ENCODE measurements at regions of chr5 and their contacts with region 1.

Region 1: GRCh38 chr5:141960449-141961202 is 2.6 kb upstream of the PCDH12 start:
- DNase-seq: peak; percentile 96
- ATAC-seq: peak; percentile 92
- H3K4me3 Mint-ChIP-seq: peak overlapping the region; percentile 40
- H3K27ac Mint-ChIP-seq: peak overlapping the region; percentile 86
- H3K4me1 Mint-ChIP-seq: peaks cover 58% of the 10 kb centered on the region
- H3K27me3 Mint-ChIP-seq: no peaks in the 10 kb centered on the region

Region 2: GRCh38 chr5:141650851-141651727 is 309.5 kb before region 1 on chr5 and contains the start of gene FCHSD1:
- CTCF ChIA-PET with region 1: interaction called, 10 read pairs
- POLR2A ChIA-PET with region 1: no interaction called
- DNase-seq: peak; percentile 91
- ATAC-seq: peak; percentile 95
- H3K4me3 Mint-ChIP-seq: peak within 1 kb of the TSS; percentile 95
- H3K27ac Mint-ChIP-seq: peak within 1 kb of the TSS; percentile 95
- H3K4me1 Mint-ChIP-seq: peaks cover 45% of the 10 kb centered on the region
- H3K27me3 Mint-ChIP-seq: no peaks in the 10 kb centered on the region
- total RNA-seq, gene FCHSD1: 46.9 to 47.8 TPM

Region 3: DNA sequence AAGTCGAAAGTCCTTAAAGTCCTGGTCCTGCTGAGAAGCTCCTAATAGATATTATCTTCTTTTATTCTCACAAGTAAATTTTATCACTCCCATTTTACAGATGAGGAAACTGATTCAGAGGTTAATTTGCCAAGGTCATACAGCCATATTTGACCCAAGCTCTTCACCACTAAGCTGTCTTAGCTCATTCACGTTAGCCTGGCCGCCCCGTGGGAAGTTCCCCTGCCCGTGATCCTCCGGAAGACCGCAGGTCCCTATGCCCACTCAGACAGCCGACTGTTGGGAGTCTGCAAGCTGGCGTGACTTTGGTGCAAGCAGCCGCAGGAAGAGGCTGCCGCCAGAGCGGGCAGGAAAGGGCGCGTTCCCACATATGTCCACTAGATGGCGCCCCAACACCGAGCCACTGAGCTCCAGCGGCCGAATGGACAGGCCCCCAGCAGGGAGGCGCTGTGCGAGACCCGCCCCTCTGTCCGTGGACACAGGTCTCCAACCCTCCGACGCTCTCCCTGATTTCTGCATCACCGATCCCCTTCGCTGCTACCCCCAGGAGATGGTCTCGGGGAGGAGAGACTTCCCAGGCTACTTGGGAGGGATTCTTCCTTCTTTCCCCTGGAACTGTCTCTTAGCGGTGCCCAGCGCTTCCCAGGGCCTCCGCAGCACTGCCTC is 268.6 kb before region 1 on chr5:
- CTCF ChIA-PET with region 1: interaction called, 224 read pairs
- POLR2A ChIA-PET with region 1: interaction called, 14 read pairs
- DNase-seq: peak; percentile 89
- ATAC-seq: peak; percentile 89
- H3K4me3 Mint-ChIP-seq: peak overlapping the region; percentile 71
- H3K27ac Mint-ChIP-seq: peak overlapping the region; percentile 75
- H3K4me1 Mint-ChIP-seq: peaks cover 28% of the 10 kb centered on the region
- H3K27me3 Mint-ChIP-seq: peaks cover 23% of the 10 kb centered on the region

Region 4: GRCh38 chr5:141722266-141722665 is 238.4 kb before region 1 on chr5:
- CTCF ChIA-PET with region 1: no interaction called
- POLR2A ChIA-PET with region 1: no interaction called
- DNase-seq: no peak
- ATAC-seq: no peak
- H3K4me3 Mint-ChIP-seq: no peak overlapping the region
- H3K27ac Mint-ChIP-seq: no peak overlapping the region
- H3K4me1 Mint-ChIP-seq: no peaks in the 10 kb centered on the region
- H3K27me3 Mint-ChIP-seq: peaks cover 13% of the 10 kb centered on the region

Region 5: GRCh38 chr5:141783005-141783941 is 177.4 kb before region 1 on chr5:
- CTCF ChIA-PET with region 1: no interaction called
- POLR2A ChIA-PET with region 1: no interaction called
- DNase-seq: no peak
- ATAC-seq: no peak
- H3K4me3 Mint-ChIP-seq: no peak overlapping the region
- H3K27ac Mint-ChIP-seq: no peak overlapping the region
- H3K4me1 Mint-ChIP-seq: peaks cover 2% of the 10 kb centered on the region
- H3K27me3 Mint-ChIP-seq: peaks cover 8% of the 10 kb centered on the region

Region 6: DNA sequence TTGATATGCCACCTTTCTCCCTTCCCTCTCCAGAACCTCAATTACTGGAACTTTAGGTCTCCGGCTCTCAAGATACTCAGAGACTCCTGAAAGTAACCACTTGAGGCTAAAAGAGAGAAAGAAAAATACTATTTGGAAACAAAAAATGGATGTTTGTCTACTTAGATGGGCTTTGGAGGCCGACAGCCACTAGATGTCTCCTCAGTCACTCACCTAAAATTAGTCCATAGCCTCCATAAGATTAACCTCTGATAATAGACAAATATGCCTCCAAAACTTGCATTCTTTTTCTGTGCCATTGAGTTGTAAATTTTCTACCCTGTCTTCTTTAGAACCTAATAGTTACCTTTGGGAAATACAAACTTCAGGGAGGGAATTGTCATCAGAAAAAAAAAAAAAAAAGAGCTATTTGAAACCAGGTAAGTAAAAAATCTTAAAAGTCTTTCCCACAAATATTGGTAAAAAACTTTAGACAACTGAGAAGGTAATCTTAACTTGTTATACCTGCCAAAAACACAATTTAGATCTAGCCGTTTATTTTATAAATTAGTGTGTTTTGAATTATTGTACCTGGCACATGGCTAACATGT is 71.2 kb before region 1 on chr5:
- CTCF ChIA-PET with region 1: interaction called, 145 read pairs
- POLR2A ChIA-PET with region 1: interaction called, 7 read pairs
- DNase-seq: no peak
- ATAC-seq: no peak
- H3K4me3 Mint-ChIP-seq: no peak overlapping the region
- H3K27ac Mint-ChIP-seq: no peak overlapping the region
- H3K4me1 Mint-ChIP-seq: no peaks in the 10 kb centered on the region
- H3K27me3 Mint-ChIP-seq: peaks cover 28% of the 10 kb centered on the region

Region 7: DNA sequence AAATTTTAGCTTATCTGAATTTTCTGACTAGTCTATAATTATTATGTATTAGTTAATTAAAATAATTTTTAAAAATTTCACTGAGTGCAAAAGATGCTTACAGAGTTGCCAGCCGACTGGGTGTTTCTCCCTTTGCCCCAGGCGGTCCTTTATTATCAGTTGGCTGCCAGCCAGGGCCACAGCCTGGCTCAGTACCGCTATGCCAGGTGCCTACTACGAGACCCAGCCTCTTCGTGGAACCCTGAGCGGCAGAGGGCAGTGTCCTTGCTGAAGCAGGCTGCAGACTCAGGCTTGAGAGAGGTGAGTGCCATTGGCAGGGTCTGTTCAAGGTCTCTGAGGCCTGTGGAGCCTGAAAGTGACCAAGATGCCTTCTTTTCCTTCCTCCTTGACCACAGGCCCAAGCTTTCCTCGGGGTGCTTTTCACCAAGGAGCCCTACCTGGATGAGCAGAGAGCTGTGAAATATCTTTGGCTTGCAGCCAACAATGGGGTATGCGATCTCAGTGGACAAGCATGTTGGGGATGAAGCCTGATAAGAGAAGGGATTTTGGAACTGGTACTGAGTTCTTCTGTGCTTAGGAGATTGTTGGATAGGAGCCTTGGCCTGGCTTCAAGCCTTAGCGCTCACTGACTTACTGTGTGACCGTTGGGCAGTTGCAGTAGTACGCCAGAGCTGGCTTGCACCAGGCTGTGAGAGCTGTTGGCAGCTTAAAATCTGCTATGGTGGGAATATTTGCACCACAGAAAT is 26.4 kb before region 1 on chr5:
- CTCF ChIA-PET with region 1: interaction called, 49 read pairs
- POLR2A ChIA-PET with region 1: no interaction called
- DNase-seq: no peak
- ATAC-seq: no peak
- H3K4me3 Mint-ChIP-seq: no peak overlapping the region
- H3K27ac Mint-ChIP-seq: no peak overlapping the region
- H3K4me1 Mint-ChIP-seq: peaks cover 3% of the 10 kb centered on the region
- H3K27me3 Mint-ChIP-seq: no peaks in the 10 kb centered on the region

Region 8: GRCh38 chr5:141992349-141992963 is 31.8 kb after region 1 on chr5:
- CTCF ChIA-PET with region 1: interaction called, 12 read pairs
- POLR2A ChIA-PET with region 1: no interaction called
- DNase-seq: peak; percentile 87
- ATAC-seq: peak; percentile 91
- H3K4me3 Mint-ChIP-seq: no peak overlapping the region
- H3K27ac Mint-ChIP-seq: no peak overlapping the region
- H3K4me1 Mint-ChIP-seq: peaks cover 3% of the 10 kb centered on the region
- H3K27me3 Mint-ChIP-seq: no peaks in the 10 kb centered on the region

Measured in activated CD8-positive, alpha-beta T cell treated with anti-CD3 and anti-CD28 coated beads, Interleukin-2, amount 10 ng/mL, durations not matched to agents 7 days and 5 days (primary cell).